Activated CD4-positive, alpha-beta T cell treated with anti-CD3 and anti-CD28 coated beads, Interleukin-2, amount 10 ng/mL, durations not matched to agents 24 days and 14 days (primary cell): ENCODE measurements at regions of chr2 and their contacts with region 1.

Region 1: DNA sequence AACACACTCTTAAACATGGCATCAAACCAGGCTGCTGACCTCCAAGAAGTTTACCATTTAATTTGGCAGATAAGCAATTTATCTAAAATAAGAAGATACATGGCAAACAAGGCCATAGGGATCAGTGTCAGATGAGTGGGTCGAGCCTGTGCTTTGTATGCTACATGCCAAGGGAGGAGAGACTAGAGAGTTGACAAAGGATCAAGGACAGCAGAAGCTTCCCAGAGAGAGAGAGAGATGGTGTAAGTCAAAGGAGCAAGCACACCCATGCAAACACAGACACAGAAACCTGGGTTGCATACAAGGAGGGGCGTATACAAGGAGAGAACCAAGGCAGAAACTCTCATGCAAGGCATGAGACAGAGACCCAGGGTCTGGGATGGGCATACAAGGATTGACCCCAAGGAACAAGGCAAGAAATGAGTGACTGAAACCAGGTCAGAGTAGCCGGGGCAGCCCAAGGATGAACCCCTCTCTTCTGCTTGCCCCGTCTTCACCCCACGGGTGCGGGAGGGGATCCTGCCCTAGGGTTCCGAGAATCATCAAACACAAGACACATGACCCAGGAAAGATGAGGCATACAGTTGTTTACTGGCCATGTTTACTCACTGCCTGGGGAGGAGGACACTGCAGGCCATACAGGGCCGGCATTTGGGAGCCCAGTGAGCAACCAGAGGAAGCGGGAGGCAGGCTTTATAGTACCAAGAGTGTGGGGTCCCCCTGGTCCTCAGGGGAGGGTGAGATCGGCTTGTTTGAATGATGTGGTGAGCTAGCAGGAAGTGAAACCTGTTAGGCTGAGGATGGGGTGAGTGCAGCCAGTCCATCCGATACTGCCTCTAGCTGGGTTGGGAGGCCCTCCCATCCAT is 529.2 kb upstream of the ID2 start:
- DNase-seq: peak; percentile 49
- H3K4me3 Mint-ChIP-seq: no peak overlapping the region
- H3K27ac Mint-ChIP-seq: peak overlapping the region; percentile 12
- H3K4me1 Mint-ChIP-seq: peaks cover 26% of the 10 kb centered on the region
- H3K27me3 Mint-ChIP-seq: no peaks in the 10 kb centered on the region

Region 2: DNA sequence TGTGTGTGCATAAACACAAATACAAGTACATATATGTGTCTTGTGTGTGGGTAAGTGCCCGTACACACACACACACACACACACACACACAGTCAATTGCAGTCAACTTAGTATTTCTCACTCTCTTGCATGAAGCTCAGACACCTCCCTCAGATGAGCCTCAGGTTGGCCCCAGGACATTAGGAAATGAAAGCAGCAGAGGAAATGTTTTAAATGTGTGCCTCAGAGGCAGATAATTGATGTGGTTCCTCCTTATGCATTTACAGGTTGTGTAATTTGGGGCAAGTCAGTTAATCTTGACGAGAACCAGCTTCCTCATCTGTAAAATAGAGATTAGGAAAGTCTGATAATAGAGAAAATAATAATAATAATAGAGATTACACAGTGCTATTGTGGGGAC is 284.8 kb before region 1 on chr2:
- intact Hi-C with region 1: no loop called
- DNase-seq: peak; percentile 69
- H3K4me3 Mint-ChIP-seq: no peak overlapping the region
- H3K27ac Mint-ChIP-seq: no peak overlapping the region
- H3K4me1 Mint-ChIP-seq: peaks cover 1% of the 10 kb centered on the region
- H3K27me3 Mint-ChIP-seq: no peaks in the 10 kb centered on the region

Region 3: DNA sequence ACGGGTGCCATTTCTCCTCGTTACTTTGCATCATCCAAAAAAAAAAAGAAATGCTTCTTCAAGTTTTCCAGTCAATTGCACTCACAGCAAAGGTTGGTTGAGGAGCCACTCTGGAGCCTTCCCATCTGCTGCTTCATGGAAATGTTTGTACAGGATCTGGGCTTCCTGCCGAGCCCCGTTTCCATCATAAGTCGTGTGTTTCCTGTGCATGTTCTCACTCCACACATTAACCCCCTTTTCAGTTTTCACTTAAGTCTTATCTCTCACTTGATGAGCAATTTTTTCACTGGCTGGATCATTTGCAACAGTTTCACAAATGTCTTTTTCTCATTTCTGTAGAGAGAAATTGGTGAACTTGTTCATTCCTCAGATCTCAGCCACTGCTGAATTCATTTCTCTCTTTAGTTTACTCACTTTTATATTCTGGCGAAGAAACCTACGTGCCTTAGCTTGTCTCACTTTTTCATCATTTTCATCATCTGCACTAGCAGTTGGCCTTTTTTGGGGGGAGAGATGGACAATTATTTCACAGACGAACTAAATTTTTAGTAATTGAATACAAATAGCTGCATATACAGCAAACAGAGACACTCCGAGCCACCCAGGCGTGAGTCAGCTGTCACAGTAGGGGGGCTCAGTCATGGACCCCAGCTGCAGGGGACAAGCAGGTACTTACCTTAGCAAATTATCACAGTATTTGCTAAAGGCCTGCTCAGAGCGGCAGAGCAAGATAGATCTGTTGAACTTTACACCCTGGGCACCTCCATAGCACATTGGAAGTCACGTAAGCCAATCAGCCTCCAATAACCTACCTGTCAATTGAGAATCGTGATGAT is 221.6 kb before region 1 on chr2:
- intact Hi-C with region 1: loop called (anchors 5 kb)
- DNase-seq: peak; percentile 54
- H3K4me3 Mint-ChIP-seq: peak overlapping the region; percentile 1
- H3K27ac Mint-ChIP-seq: peak overlapping the region; percentile 76
- H3K4me1 Mint-ChIP-seq: peaks cover 10% of the 10 kb centered on the region
- H3K27me3 Mint-ChIP-seq: no peaks in the 10 kb centered on the region

Region 4: GRCh38 chr2:8049851-8050571 is 102.6 kb before region 1 on chr2:
- intact Hi-C with region 1: loop called (anchors 1 kb)
- DNase-seq: peak; percentile 81
- H3K4me3 Mint-ChIP-seq: peak overlapping the region; percentile 7
- H3K27ac Mint-ChIP-seq: peak overlapping the region; percentile 84
- H3K4me1 Mint-ChIP-seq: peaks cover 23% of the 10 kb centered on the region
- H3K27me3 Mint-ChIP-seq: no peaks in the 10 kb centered on the region

Region 5: DNA sequence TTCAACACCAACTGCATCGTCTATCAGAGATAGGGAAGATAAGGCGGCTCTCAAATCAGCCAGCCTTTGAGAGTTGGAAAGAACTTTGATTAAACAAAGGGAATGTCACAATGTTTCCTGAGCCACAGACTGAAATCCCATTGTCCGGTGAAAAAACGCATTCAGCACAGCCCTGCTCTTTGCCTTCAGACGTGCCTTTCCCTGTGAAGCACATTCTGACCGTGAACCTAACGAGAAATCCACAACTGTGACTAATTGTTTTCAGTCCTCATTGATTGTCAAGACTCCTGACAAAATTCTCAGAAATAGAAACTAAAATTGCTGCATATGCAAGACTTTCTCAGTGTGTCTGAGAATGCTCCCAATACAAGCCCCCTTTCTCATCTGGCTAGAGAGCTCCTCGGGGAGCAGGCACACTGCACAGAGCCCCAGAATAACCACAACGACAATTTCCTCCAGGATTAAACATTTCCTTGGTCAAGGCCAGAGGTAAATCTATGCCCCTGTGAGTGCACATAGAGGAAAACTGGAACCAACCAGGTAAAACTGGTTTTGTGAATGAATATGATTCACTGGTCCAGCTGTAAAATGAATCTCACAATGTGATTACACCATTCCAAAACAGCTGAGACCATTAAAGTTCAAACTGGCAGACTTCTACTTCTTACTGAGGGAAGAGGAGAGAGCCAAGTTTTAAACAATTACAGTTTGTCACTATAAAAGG is 32.7 kb before region 1 on chr2:
- intact Hi-C with region 1: loop called (anchors 2 kb)
- DNase-seq: no peak
- H3K4me3 Mint-ChIP-seq: peak overlapping the region; percentile 33
- H3K27ac Mint-ChIP-seq: peak overlapping the region; percentile 86
- H3K4me1 Mint-ChIP-seq: peaks cover 20% of the 10 kb centered on the region
- H3K27me3 Mint-ChIP-seq: no peaks in the 10 kb centered on the region

Region 6: GRCh38 chr2:8169443-8169842 is 16.8 kb after region 1 on chr2:
- intact Hi-C with region 1: loop called (anchors 2 kb)
- DNase-seq: no peak
- H3K4me3 Mint-ChIP-seq: no peak overlapping the region
- H3K27ac Mint-ChIP-seq: no peak overlapping the region
- H3K4me1 Mint-ChIP-seq: peaks cover 10% of the 10 kb centered on the region
- H3K27me3 Mint-ChIP-seq: no peaks in the 10 kb centered on the region

Region 7: DNA sequence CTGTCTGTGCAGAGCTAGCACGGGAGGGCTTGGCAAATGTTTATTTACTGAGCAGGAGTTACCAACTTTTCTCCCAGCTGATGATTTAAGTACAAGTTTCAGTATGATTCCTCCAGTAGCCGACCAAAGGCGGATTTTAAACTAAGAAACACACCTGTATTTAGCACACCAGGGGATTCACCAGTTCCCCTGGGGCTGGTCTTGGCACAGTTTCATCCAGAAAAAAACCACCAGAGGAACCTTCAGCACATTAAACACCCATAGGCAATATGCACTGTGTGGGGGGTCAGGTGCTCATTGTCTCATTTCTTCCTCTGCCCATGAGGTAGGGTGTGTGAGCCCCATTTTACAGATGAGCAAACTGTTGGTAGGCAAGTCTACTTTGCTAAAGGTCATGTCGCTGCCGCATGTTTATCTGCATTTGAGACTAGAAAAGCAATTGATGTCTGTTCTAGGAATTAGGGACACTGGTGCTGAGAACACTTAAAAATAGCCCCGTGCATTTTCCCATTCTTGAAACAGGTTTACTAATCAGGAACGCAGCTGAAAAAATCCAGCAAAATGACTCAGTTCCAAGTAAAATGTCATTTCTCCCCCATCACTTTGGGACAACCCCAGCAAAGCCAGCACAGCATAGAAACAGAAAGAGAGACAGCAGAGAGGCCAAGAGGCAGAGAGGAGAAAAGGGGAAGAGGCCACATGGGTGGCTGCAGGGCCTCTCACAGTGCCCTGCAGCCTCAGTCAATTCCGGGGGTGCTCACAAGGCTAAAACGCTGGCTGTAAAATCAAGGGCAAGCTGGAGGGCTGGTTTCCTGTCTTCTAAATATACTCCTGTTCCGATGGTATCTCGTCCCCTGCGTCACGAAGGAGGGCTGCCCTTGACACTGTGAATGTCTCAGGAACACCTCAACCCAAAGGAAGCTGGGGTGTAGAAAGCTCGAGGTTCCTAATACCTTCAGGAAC is 362.5 kb after region 1 on chr2:
- intact Hi-C with region 1: loop called (anchors 1 kb)
- DNase-seq: peak; percentile 87
- H3K4me3 Mint-ChIP-seq: peak overlapping the region; percentile 58
- H3K27ac Mint-ChIP-seq: peak overlapping the region; percentile 96
- H3K4me1 Mint-ChIP-seq: peaks cover 63% of the 10 kb centered on the region
- H3K27me3 Mint-ChIP-seq: no peaks in the 10 kb centered on the region